ENCODE measurements at regions of chrX and their contacts with region 1.

Region 1: GRCh38 chrX:112642349-112642748 is 37.4 kb downstream of the LHFPL1 start:
- DNase-seq: peak; percentile 26 to 31
- H3K4me3 ChIP-seq: no peak overlapping the region
- H3K4me3 Mint-ChIP-seq: no peak overlapping the region
- H3K27ac Mint-ChIP-seq: no peak overlapping the region
- H3K4me1 ChIP-seq: no peaks in the 10 kb centered on the region
- H3K4me1 Mint-ChIP-seq: no peaks in the 10 kb centered on the region
- H3K27me3 ChIP-seq: no peaks in the 10 kb centered on the region
- H3K27me3 Mint-ChIP-seq: peaks cover 9% of the 10 kb centered on the region
- CTCF ChIP-seq: peak; percentile 33 to 54

Region 2: GRCh38 chrX:112368373-112368772 is 274.0 kb before region 1 on chrX:
- CTCF ChIA-PET with region 1: no interaction called
- POLR2A ChIA-PET with region 1: no interaction called
- intact Hi-C with region 1: loop called (anchors 10 kb)
- DNase-seq: peak in 1 of 2 experiments; percentile 2
- H3K4me3 ChIP-seq: no peak overlapping the region
- H3K4me3 Mint-ChIP-seq: no peak overlapping the region
- H3K27ac Mint-ChIP-seq: no peak overlapping the region
- H3K4me1 ChIP-seq: no peaks in the 10 kb centered on the region
- H3K4me1 Mint-ChIP-seq: no peaks in the 10 kb centered on the region
- H3K27me3 ChIP-seq: no peaks in the 10 kb centered on the region
- H3K27me3 Mint-ChIP-seq: peaks cover 3% of the 10 kb centered on the region
- CTCF ChIP-seq: peak in 1 of 2 experiments; percentile 38

Measured in Caco-2 (cell line).